Thyroid gland (tissue), 4 donors: ENCODE measurements at regions of chr4 and their contacts with region 1.

Region 1: GRCh38 chr4:122602277-122603142 is 18.4 kb downstream of the IL21 start:
- DNase-seq: peak; percentile 47 to 64
- H3K4me3 ChIP-seq: no peak overlapping the region
- H3K27ac ChIP-seq: no peak overlapping the region
- H3K4me1 ChIP-seq: peaks cover 0 to 4% of the 10 kb centered on the region in 2 donors
- H3K27me3 ChIP-seq: no peaks in the 10 kb centered on the region
- CTCF ChIP-seq: peak in 5 of 6 experiments; percentile 29 to 54 (median 44)
- POLR2A ChIP-seq: no peak

Region 2: GRCh38 chr4:122710434-122711308 is 108.2 kb after region 1 on chr4:
- intact Hi-C with region 1: loop called (anchors 5 kb)
- DNase-seq: no peak
- H3K4me3 ChIP-seq: no peak overlapping the region
- H3K27ac ChIP-seq: no peak overlapping the region
- H3K4me1 ChIP-seq: no peaks in the 10 kb centered on the region
- H3K27me3 ChIP-seq: no peaks in the 10 kb centered on the region
- CTCF ChIP-seq: no peak
- POLR2A ChIP-seq: no peak